ENCODE measurements at regions of chr13 and their contacts with region 1.

Region 1: GRCh38 chr13:50410921-50411712 is 395.9 kb downstream of the KCNRG start:
- DNase-seq: no peak
- H3K4me3 ChIP-seq: no peak overlapping the region
- H3K27ac ChIP-seq: no peak overlapping the region
- H3K4me1 ChIP-seq: no peaks in the 10 kb centered on the region
- H3K27me3 ChIP-seq: no peaks in the 10 kb centered on the region
- CTCF ChIP-seq: no peak
- EP300 ChIP-seq: no peak
- POLR2A ChIP-seq: no peak

Region 2: DNA sequence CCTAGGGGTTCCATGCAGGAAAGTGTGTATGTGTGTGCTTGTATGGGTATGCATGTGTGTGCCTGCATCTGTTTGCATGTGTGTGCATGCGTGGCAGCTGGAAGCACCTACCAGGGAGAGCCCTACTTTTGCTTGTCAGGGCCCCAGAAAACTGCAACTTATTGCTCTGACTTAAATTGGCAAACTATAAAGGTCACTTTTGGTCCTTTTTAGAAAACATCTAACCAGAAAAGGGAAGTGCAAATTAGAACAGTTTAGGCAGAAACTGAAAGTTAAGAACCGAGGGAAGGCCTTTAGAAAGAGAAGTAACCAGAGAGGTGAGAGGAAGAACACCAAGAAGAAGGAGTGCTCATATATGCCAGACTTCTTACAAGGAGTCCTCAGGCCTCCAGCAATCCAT is 399.9 kb after region 1 on chr13:
- intact Hi-C with region 1: no loop called
- DNase-seq: no peak
- H3K4me3 ChIP-seq: no peak overlapping the region
- H3K27ac ChIP-seq: no peak overlapping the region
- H3K4me1 ChIP-seq: no peaks in the 10 kb centered on the region
- H3K27me3 ChIP-seq: no peaks in the 10 kb centered on the region
- CTCF ChIP-seq: no peak
- EP300 ChIP-seq: no peak
- POLR2A ChIP-seq: no peak

Region 3: DNA sequence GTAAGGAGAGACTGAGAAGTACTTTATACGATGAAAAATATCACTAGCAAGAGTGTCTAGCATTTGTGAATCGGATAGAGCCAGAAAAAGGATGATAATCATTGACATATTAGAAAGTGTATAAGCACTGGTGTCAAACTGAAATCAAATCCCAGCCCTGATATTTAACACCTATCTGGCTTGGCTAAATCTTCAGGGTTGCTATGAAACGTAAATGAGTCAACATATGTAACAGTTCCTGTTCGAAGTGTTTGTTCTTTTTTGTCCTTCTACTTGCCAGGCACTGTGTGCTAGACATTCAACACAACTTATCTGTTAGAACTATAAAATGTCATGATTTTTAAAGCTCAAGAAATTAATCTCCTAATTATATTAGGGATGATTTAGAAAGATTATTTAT is 969.2 kb after region 1 on chr13:
- intact Hi-C with region 1: loop called in 1 of 4 experiments (anchors 5 kb)
- DNase-seq: no peak
- H3K4me3 ChIP-seq: no peak overlapping the region
- H3K27ac ChIP-seq: no peak overlapping the region
- H3K4me1 ChIP-seq: no peaks in the 10 kb centered on the region
- H3K27me3 ChIP-seq: no peaks in the 10 kb centered on the region
- CTCF ChIP-seq: no peak
- EP300 ChIP-seq: no peak
- POLR2A ChIP-seq: no peak

Measured in ovary (tissue), 10 donors.